Psoas muscle (tissue), 8 donors: ENCODE measurements at regions of chr12 and their contacts with region 1.

Region 1: DNA sequence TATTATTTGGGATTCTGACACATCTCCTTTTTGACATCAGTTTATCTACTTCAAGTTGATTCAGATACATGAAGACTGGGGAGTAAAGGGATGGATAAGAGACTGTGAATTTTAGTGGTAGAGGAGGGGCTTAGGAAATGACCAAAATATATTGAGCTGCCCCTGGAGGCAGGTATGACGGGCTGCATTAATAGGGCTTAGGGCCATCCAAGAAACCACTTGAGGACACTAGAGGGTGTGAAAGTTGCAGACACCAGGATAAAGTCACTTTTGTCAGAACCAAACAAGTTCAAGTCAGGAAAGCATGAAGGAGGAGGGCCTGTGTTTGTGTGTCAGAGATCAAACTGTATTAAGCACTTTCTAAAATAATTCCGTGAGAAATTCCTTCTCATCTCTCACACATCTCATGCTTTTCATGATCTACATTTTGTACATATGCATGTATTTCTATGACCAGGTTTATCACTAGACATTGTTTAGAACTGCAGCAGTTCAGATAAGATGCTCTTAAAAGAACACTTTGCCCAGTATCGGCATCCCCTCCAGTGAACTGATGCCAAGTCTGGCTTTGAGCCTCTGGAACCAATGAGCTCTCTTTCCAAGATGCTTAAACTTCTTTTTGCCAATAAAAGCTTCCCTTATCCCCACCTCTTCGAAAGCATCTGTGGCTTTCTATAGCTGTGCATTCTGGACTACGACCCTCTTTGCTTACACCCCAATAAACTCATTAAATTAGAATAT is 136.9 kb downstream of the SLC38A1 start:
- DNase-seq: no peak
- ATAC-seq: no peak
- H3K4me3 ChIP-seq: no peak overlapping the region
- H3K27ac ChIP-seq: no peak overlapping the region
- H3K4me1 ChIP-seq: no peaks in the 10 kb centered on the region
- H3K27me3 ChIP-seq: no peaks in the 10 kb centered on the region
- CTCF ChIP-seq: no peak

Region 2: DNA sequence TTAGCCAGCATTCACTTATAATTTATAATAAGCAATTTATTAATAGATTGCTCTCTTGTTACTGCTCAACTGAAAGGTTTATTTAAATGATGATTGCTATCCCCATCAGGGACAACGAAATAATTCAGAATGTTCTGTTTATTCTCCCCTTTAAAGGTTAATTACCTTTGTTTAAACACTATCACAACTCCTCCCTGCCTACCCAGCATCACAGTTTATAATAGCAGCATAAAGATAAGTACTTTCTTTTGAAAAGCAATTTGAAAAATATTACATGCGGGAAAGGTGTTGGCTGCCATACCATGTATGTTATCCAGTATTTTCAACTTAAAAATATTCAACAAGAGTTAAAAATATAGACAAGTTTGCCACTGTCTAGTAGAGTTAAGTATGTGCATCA is 172.2 kb before region 1 on chr12:
- intact Hi-C with region 1: no loop called
- DNase-seq: no peak
- ATAC-seq: no peak
- H3K4me3 ChIP-seq: no peak overlapping the region
- H3K27ac ChIP-seq: no peak overlapping the region
- H3K4me1 ChIP-seq: peaks cover 24% of the 10 kb centered on the region
- H3K27me3 ChIP-seq: no peaks in the 10 kb centered on the region
- CTCF ChIP-seq: no peak

Region 3: GRCh38 chr12:46831335-46832129 is 699.6 kb after region 1 on chr12:
- intact Hi-C with region 1: loop called in 1 of 2 experiments (anchors 10 kb)
- DNase-seq: peak; percentile 65 to 91
- ATAC-seq: peak; percentile 92 to 96 (median 94)
- H3K4me3 ChIP-seq: peak overlapping the region; percentile 74
- H3K27ac ChIP-seq: peak overlapping the region; percentile 92
- H3K4me1 ChIP-seq: no peaks in the 10 kb centered on the region
- H3K27me3 ChIP-seq: no peaks in the 10 kb centered on the region
- CTCF ChIP-seq: no peak